Activated T-helper 2 cell treated with anti-CD3 and anti-CD28 coated beads, Interferon-gamma antibody, Interleukin-2, Interleukin-4, amounts not matched to agents 10 μg/mL and 5 μg/mL and 100 μg/mL, durations not matched to agents 14 hours and 24 hours and 36 hours (primary cell): ENCODE measurements at regions of chr10 and their contacts with region 1.

Region 1: GRCh38 chr10:79542626-79543025 is 17.6 kb downstream of the SFTPA2 start:
- DNase-seq: no peak
- H3K4me3 Mint-ChIP-seq: no peak overlapping the region
- H3K27ac Mint-ChIP-seq: no peak overlapping the region
- H3K4me1 Mint-ChIP-seq: peaks cover 21% of the 10 kb centered on the region
- H3K27me3 Mint-ChIP-seq: peaks cover 6% of the 10 kb centered on the region

Region 2: DNA sequence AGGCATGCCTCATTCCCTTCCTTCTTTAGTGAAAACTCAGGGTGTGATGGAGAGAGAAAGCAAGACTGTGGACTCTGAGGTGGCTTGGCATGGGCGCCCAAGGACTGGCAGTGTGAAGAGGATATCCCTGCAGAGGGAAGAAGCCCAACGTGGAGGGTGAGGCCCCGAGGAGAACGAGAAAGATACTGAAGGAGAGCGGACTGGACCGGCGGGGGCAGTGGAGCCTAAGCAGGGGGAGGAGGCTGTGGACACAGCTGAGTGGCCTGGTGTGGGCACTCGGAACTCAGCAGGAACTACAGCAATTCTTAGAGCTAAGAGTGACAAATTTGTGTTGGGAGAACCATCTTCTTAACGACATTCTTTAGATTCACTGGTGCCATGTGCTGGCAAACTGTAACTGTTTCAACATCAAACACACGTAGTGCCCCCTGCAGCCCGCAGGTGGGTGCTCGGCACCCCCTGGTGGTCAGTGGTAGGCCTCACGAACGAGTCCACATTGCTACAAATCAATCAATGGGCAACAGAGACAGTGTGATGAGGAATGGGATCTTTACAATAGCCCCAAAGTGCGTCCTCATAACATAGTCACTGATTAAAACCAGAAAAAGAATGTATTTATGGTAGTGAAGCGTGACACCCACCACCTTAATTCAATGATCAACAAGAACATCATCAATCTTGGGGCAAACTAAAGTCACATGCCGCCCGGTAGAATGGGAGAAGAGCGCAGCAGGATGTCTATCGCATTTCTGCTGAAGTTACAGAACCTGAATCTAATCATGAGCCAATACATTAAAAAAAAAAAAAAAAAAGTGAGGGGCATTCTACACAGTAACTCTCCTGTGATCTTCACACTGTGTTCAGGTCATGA is 66.1 kb after region 1 on chr10:
- intact Hi-C with region 1: loop called (anchors 1 kb)
- DNase-seq: no peak
- H3K4me3 Mint-ChIP-seq: no peak overlapping the region
- H3K27ac Mint-ChIP-seq: no peak overlapping the region
- H3K4me1 Mint-ChIP-seq: no peaks in the 10 kb centered on the region
- H3K27me3 Mint-ChIP-seq: peaks cover 6% of the 10 kb centered on the region

Region 3: GRCh38 chr10:79929409-79929904 is 386.8 kb after region 1 on chr10:
- intact Hi-C with region 1: loop called (anchors 1 kb)
- DNase-seq: peak; percentile 54
- H3K4me3 Mint-ChIP-seq: no peak overlapping the region
- H3K27ac Mint-ChIP-seq: no peak overlapping the region
- H3K4me1 Mint-ChIP-seq: no peaks in the 10 kb centered on the region
- H3K27me3 Mint-ChIP-seq: peaks cover 29% of the 10 kb centered on the region